ENCODE measurements at regions of chr7 and their contacts with region 1.

Region 1: DNA sequence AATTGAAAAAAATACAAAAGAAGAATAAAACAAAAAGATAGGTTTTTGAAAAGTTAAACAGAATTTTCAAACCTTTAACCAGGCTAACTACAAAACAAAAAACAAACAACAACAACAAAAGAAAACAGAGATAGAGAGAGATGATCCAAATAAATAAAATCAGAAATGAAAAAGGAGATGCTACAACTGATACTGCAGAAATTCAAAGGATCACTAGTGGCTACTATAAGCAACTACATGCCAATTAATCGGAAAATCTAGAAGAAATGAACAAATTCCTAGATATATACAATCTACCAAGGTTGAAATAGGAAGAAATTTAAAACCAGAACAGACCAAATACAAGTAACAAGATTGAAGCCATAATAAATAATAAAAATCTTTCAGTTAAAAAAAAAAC is 326.8 kb upstream of the VSTM2A start:
- ATAC-seq: no peak
- H3K4me3 ChIP-seq: no peak overlapping the region
- H3K27ac ChIP-seq: no peak overlapping the region
- H3K4me1 ChIP-seq: no peaks in the 10 kb centered on the region

Region 2: DNA sequence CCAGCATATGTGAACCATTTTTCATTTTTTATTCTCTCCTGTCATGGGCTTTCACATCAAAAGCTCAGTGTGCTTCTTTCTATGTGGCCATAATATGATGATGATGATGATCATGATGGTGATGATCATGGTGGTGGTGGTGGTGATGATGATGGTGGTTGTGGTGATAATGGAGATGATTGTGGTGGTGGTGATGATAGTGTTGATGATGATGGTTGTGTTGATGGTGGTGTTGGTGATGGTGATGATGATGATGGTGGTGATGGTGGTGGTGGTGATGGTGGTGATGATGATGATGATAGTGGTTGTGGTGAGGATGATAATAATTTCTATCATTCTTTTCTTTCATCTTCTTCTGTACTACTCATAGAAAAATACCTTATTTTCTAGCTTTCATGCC is 86.4 kb before region 1 on chr7:
- in situ Hi-C with region 1: no loop called
- ATAC-seq: no peak
- H3K4me3 ChIP-seq: no peak overlapping the region
- H3K27ac ChIP-seq: no peak overlapping the region
- H3K4me1 ChIP-seq: no peaks in the 10 kb centered on the region

Region 3: GRCh38 chr7:54292171-54292925 is 76.9 kb after region 1 on chr7:
- in situ Hi-C with region 1: loop called in 1 of 9 experiments (anchors 10 kb)
- ATAC-seq: peak in 5 of 8 experiments; percentile 47 to 61 (median 57)
- H3K4me3 ChIP-seq: no peak overlapping the region
- H3K27ac ChIP-seq: no peak overlapping the region
- H3K4me1 ChIP-seq: peaks cover 0 to 6% of the 10 kb centered on the region in 2 donors

Region 4: DNA sequence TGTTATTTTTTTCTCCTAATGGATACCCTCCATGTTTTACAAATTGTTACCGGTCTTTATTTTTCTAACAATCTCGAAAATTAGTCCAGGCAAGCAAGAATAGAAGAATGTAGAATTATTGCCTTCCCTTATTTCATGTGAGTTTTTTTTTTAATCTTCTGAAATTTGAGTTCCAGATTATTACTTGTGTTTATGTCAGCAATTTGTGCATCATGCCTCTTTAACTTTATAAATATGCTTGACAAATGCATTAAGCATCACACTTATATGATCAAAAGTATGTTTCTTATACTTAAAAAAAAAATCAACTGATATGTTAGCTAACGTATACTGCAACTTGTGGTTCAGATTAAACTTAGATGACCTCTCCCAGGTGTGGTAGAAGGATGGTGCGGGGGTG is 84.0 kb after region 1 on chr7:
- in situ Hi-C with region 1: loop called in 2 of 9 experiments (anchors 10 kb)
- ATAC-seq: no peak
- H3K4me3 ChIP-seq: no peak overlapping the region
- H3K27ac ChIP-seq: no peak overlapping the region
- H3K4me1 ChIP-seq: no peaks in the 10 kb centered on the region